ENCODE measurements at regions of chr1 and their contacts with region 1.

Region 1: GRCh38 chr1:45490626-45491486 is at the start of gene TESK2:
- DNase-seq: peak; percentile 99
- H3K4me3 ChIP-seq: peak within 1 kb of the TSS; percentile 56
- H3K27ac ChIP-seq: no peak within 1 kb of the TSS
- H3K4me1 ChIP-seq: peaks cover 3% of the 10 kb centered on the region
- H3K27me3 ChIP-seq: peaks cover 16% of the 10 kb centered on the region
- CTCF ChIP-seq: no peak
- total RNA-seq, gene TESK2: 0.75 and 2.7 TPM in 2 replicates

Region 2: DNA sequence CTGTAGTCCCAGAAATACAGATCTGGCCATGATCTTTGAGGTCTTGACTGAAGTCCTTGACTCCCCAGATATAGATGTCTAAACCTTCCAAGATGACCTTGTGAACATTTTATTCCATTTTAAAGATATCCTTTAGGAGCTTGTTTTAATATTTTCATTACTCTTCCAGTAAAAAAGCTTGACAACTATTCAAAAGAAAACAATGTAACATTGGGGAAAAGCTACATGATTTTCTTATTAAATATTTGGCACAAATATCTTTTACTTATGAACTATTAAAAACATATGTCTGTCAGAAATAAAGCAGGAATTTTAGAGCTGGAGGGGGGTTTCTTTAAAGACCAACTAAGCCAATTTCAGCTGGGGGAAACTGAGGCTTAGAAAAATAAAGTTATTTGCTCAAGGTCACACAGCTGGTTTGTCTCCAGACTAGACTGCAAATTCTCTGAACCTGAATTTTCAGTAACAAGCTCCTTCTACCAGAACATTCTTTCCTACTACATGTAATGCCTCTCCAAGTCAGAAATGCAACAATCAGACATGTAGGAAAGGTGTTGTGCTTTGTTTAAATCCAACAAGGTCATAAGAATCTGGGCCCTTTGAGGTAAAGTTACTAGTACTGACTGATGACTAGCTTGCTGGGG is 580.8 kb before region 1 on chr1:
- CTCF ChIA-PET with region 1: no interaction called
- POLR2A ChIA-PET with region 1: no interaction called
- intact Hi-C with region 1: no loop called
- DNase-seq: no peak
- H3K4me3 ChIP-seq: no peak overlapping the region
- H3K27ac ChIP-seq: no peak overlapping the region
- H3K4me1 ChIP-seq: no peaks in the 10 kb centered on the region
- H3K27me3 ChIP-seq: no peaks in the 10 kb centered on the region
- CTCF ChIP-seq: no peak

Region 3: DNA sequence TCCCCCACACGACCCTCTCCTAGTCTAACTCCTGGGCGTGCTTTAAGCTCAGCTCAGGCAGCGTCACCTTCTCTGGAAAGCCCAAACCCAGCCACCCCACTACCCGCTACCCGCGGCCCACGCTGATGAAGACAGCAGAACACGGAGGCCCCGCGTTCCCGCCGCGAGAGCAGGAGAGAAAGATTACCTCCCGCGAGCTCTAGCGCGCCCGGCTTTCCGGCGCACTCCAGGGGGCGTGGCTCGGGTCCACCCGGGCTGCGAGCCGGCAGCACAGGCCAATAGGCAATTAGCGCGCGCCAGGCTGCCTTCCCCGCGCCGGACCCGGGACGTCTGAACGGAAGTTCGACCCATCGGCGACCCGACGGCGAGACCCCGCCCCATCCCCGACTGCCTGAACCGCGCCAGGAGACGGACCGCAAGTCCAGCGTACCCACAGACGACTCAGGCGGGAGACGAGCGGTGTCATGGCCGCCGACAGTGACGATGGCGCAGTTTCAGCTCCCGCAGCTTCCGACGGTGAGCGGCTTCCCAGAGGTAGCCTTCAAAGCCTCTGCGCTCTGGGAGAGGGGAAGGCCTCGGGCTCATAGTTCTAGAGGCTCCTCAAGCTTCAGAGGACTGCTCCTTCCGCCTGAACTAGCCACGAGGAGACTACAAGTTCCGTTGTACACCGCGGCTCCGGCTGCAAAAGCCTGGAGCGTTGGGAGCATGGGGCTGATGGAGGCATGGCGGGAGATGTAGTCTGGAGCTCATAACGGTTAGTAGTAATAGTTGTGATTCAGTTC is 150.9 kb before region 1 on chr1 and contains the starts of genes MUTYH and TOE1:
- CTCF ChIA-PET with region 1: interaction called, 6 read pairs
- POLR2A ChIA-PET with region 1: no interaction called
- intact Hi-C with region 1: loop called (anchors 5 kb)
- DNase-seq: peak; percentile 97
- H3K4me3 ChIP-seq: peak within 1 kb of the TSS; percentile 81
- H3K27ac ChIP-seq: peak within 1 kb of the TSS; percentile 98
- H3K4me1 ChIP-seq: peaks cover 10% of the 10 kb centered on the region
- H3K27me3 ChIP-seq: no peaks in the 10 kb centered on the region
- CTCF ChIP-seq: no peak
- total RNA-seq, gene MUTYH: 26.7 and 26.8 TPM in 2 replicates
- total RNA-seq, gene TOE1: 20.6 TPM in 2 replicates

Region 4: GRCh38 chr1:45359882-45360513 is 130.9 kb before region 1 on chr1:
- CTCF ChIA-PET with region 1: interaction called, 22 read pairs
- POLR2A ChIA-PET with region 1: no interaction called
- intact Hi-C with region 1: loop called (anchors 1 kb)
- DNase-seq: peak; percentile 72
- H3K4me3 ChIP-seq: no peak overlapping the region
- H3K27ac ChIP-seq: no peak overlapping the region
- H3K4me1 ChIP-seq: no peaks in the 10 kb centered on the region
- H3K27me3 ChIP-seq: no peaks in the 10 kb centered on the region
- CTCF ChIP-seq: peak; percentile 77